ENCODE measurements at regions of chr3 and their contacts with region 1.

Region 1: GRCh38 chr3:138329127-138329983 is at the start of gene NME9:
- DNase-seq: no peak
- H3K4me3 ChIP-seq: peak within 1 kb of the TSS; percentile 52
- H3K27me3 ChIP-seq: 0 out of 2 replicates have a peak, but pooled peaks cover under 1% of the 10 kb centered on the region
- CTCF ChIP-seq: peak; percentile 80
- polyA plus RNA-seq, gene NME9: 0.06 TPM in 1 of 2 replicates, not detected in the other

Region 2: DNA sequence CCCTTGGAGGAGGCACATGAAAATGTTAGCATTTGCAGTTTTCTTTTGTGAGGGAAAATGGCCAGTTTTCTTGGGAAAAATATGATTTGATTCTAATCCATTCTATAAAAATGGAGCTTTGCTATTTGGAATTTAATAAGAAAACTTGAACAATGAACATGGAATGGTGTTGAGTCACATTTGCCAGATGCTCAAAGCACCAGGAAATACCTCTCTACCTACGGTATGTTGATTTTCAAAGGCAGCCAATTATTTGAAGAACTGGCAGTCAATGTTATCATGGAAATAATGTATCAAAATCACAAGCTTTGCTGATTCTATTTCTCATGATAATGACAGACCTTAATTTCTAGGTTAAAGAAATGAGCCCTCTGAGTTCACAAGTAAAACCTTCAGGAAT is 14.6 kb before region 1 on chr3:
- CTCF ChIA-PET with region 1: interaction called, 11 read pairs
- POLR2A ChIA-PET with region 1: no interaction called
- DNase-seq: no peak
- H3K4me3 ChIP-seq: no peak overlapping the region
- H3K27me3 ChIP-seq: no peaks in the 10 kb centered on the region
- CTCF ChIP-seq: no peak

Region 3: GRCh38 chr3:138347960-138348753 is 18.8 kb after region 1 on chr3 and contains the start of gene MRAS:
- CTCF ChIA-PET with region 1: interaction called, 11 read pairs
- POLR2A ChIA-PET with region 1: no interaction called
- DNase-seq: no peak
- H3K4me3 ChIP-seq: peak within 1 kb of the TSS; percentile 66
- H3K27me3 ChIP-seq: no peaks in the 10 kb centered on the region; the same call in 1 of the 2 replicates
- CTCF ChIP-seq: peak; percentile 26; the same call in 1 of the 2 replicates
- polyA plus RNA-seq, gene MRAS: 90.2 and 99.8 TPM in 2 replicates

Region 4: GRCh38 chr3:138426226-138426625 is 96.9 kb after region 1 on chr3:
- CTCF ChIA-PET with region 1: interaction called, 16 read pairs
- POLR2A ChIA-PET with region 1: no interaction called
- DNase-seq: no peak
- H3K4me3 ChIP-seq: no peak overlapping the region
- H3K27me3 ChIP-seq: no peaks in the 10 kb centered on the region
- CTCF ChIP-seq: peak; percentile 64